Activated CD4-positive, alpha-beta T cell treated with anti-CD3 and anti-CD28 coated beads, Interleukin-2, amount 10 ng/mL, durations not matched to agents 24 days and 14 days (primary cell): ENCODE measurements at regions of chr1 and their contacts with region 1.

Region 1: DNA sequence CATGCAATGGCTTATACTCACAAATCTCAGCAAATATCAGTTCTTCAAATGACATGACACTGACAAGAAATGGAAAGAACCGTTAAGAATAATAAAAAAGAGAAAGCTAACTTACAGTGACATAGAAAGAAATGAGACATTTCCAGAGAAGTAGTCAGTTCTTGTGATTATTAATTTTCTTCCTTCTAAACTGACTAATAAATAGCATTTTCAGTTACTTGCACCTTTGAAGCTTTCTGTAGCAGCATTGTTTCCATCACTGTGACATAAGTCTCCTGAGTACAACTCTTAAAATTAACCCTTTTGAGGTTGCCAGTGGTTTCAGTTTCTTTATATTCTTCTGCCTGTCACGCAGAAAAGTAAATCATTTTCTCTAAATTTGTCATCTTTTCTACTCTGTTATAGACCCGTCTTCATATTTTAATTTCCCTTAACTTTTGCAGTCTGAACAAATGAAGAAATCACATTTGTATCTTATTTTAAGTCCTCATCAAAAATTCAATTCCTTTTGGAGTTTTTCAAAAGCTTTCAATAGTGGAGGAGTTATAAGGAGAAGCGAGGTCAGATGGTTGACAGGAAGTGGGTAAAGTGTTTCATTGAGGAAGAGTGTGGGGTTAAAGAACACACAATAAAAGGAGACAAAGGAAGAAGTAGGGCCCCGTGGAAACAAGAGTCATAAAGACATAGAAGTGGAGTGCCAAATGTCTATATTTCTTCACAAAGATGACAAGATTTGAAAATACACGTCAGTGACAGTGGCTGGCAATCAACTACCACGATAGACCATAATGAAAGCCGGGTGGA is 57.9 kb upstream of the S1PR1 start:
- DNase-seq: peak; percentile 82
- H3K4me3 Mint-ChIP-seq: peak overlapping the region; percentile 77
- H3K27ac Mint-ChIP-seq: peak overlapping the region; percentile 98
- H3K4me1 Mint-ChIP-seq: peaks cover 59% of the 10 kb centered on the region
- H3K27me3 Mint-ChIP-seq: no peaks in the 10 kb centered on the region

Region 2: DNA sequence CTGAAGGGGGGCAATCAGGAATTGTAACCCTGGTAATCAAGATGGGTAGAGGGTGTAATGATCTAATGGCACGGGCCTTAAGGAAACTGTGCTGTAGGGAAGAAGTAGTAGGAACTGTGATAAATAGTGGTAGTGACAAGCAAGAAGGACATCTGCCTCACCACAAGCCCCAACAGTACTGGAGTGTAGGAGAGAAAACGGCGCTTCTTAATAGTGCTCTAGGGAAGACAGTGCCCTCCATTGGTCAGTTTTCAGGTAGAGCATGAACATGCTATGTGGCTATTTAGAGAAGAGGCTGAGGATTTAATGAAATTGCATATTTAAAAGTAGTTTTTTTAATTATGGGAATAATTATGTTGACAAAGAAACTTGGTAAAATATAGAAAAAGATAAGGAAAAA is 250.8 kb before region 1 on chr1:
- intact Hi-C with region 1: loop called (anchors 5 kb)
- DNase-seq: peak; percentile 66
- H3K4me3 Mint-ChIP-seq: no peak overlapping the region
- H3K27ac Mint-ChIP-seq: no peak overlapping the region
- H3K4me1 Mint-ChIP-seq: peaks cover 44% of the 10 kb centered on the region
- H3K27me3 Mint-ChIP-seq: no peaks in the 10 kb centered on the region

Region 3: GRCh38 chr1:101025657-101026504 is 153.0 kb before region 1 on chr1 and contains the start of gene DPH5:
- intact Hi-C with region 1: loop called (anchors 1 kb)
- DNase-seq: peak; percentile 97
- H3K4me3 Mint-ChIP-seq: peak within 1 kb of the TSS; percentile 100
- H3K27ac Mint-ChIP-seq: peak within 1 kb of the TSS; percentile 98
- H3K4me1 Mint-ChIP-seq: peaks cover 42% of the 10 kb centered on the region
- H3K27me3 Mint-ChIP-seq: no peaks in the 10 kb centered on the region
- total RNA-seq, gene DPH5: 37.5 and 41.0 TPM in 2 replicates

Region 4: DNA sequence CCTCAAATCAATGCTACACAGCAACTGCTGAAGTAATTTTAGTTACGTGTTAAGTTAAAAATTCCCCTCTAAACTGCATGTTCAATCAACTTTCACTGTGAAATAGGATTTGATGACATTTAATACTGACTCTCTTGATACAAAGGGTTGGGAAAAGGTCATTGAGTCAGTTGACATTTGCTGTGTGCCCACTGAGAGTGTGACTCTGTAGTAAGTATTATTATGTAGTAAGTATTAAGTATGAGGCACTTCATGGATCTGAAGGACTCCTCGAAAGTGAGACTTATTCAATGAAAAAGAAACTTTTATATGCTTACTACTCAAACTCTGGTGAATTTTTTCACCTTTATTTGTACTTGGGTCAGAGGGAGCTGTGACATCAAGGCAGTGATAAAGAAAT is 25.2 kb before region 1 on chr1:
- intact Hi-C with region 1: loop called (anchors 1 kb)
- DNase-seq: no peak
- H3K4me3 Mint-ChIP-seq: no peak overlapping the region
- H3K27ac Mint-ChIP-seq: peak overlapping the region; percentile 35
- H3K4me1 Mint-ChIP-seq: peaks cover 32% of the 10 kb centered on the region
- H3K27me3 Mint-ChIP-seq: no peaks in the 10 kb centered on the region

Region 5: DNA sequence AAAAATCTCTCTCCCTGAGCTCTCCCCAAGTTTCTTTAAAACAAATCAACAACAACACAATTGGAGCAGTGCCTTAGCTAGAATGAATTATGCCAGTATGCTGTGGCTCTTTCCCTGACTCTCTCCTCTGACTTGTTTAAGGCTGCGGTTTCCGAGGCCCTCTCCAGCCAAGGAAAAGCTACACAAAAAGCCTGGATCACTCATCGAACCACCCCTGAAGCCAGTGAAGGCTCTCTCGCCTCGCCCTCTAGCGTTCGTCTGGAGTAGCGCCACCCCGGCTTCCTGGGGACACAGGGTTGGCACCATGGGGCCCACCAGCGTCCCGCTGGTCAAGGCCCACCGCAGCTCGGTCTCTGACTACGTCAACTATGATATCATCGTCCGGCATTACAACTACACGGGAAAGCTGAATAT is 59.8 kb after region 1 on chr1:
- intact Hi-C with region 1: loop called (anchors 1 kb)
- DNase-seq: peak; percentile 96
- H3K4me3 Mint-ChIP-seq: peak overlapping the region; percentile 90
- H3K27ac Mint-ChIP-seq: peak overlapping the region; percentile 96
- H3K4me1 Mint-ChIP-seq: peaks cover 52% of the 10 kb centered on the region
- H3K27me3 Mint-ChIP-seq: no peaks in the 10 kb centered on the region